Posterior vena cava (tissue), 2 donors: ENCODE measurements at regions of chr10 and their contacts with region 1.

Region 1: DNA sequence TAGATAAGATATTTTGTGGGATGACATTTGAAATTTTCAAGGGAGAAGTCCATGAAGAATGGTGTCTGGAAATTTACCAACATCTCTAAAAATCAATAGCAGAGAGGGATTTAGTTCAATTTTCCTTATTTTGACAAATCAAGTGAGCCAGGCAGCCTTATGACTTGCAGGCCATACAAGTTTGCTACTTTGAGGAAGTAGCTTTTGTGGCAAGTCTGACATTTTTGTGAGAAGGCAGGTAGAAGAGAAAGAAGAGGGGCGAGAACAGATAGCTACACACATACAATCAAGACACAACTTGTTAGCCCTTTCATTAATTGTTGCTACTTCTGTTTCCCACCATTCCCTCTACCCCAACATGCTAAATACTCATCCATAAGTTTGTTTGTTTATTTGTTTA is 74.5 kb upstream of the OIT3 start:
- DNase-seq: no peak

Region 2: DNA sequence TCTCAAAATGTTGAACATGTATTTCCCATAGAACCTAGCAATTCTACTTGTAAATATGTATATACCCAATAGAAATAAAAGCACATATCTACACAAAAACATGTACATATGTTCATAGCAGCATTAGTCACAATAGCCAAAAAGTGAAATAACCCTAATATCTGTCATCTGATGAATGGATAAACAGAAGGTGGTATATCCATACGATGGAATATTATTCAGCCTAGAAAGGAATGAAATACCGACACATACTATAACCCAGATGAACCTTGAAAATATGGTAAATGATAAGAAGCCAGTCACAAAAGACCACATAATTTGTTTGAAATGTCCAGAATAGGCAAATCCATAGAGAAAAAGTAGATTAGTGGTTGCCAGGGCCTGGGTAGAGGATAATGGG is 39.2 kb before region 1 on chr10:
- intact Hi-C with region 1: no loop called
- DNase-seq: no peak

Region 3: GRCh38 chr10:73119952-73120351 is 300.9 kb after region 1 on chr10:
- intact Hi-C with region 1: loop called in 1 of 2 experiments (anchors 5 kb)
- DNase-seq: no peak